Activated T-helper 1 cell treated with anti-CD3 and anti-CD28 coated beads, Interleukin-12 subunit alpha, Interleukin-12 subunit beta, Interleukin-2, Interleukin-4 antibody, amounts not matched to agents 30 ng/mL and 10 ng/mL and 1 ng/mL, durations not matched to agents 14 hours and 24 hours and 36 hours (primary cell): ENCODE measurements at regions of chr1 and their contacts with region 1.

Region 1: GRCh38 chr1:156601122-156601830 is at the start of gene GPATCH4:
- DNase-seq: peak; percentile 76
- H3K4me3 Mint-ChIP-seq: peak within 1 kb of the TSS; percentile 100
- H3K27ac Mint-ChIP-seq: peak within 1 kb of the TSS; percentile 99
- H3K4me1 Mint-ChIP-seq: peaks cover 37% of the 10 kb centered on the region
- H3K27me3 Mint-ChIP-seq: no peaks in the 10 kb centered on the region
- total RNA-seq, gene GPATCH4: 102 and 104 TPM in 2 replicates

Region 2: DNA sequence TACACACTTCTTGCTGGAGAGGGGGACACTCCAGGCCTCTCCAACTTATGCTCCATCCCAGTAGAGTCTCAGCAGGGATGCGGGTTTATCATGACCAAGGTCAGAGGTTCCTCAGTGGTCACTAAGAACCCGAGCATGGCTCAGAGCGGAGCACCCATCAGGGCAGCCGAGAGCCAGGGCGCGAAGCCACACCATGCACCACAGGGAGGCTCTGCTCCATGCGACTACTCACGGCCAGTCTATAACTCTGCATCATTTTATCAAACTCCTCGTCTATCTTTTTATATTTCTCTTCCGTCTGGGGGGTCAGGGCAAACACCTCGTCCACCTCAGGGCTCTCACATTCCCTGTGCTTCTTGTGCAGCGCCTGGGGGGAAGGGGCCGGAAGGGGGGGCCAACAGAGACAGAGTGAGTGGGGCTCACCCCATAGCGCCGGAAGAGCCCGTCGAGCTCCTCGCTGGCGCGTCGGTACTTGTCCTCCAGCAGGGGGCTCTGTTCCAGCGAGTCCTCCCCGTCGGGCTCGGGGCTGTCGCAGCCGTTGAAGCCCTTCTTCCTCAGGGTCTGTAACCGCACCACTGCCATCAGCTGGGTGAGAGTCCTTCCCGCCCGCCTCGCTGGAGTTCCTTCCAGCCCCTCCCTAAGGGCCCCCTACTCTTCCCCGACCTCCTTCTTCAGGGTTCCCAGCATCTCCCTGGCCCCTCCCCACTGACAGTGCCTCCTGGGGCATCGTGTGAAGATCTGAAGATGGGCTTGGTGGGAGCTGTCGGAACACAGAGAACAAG is 120.7 kb before region 1 on chr1:
- intact Hi-C with region 1: loop called (anchors 2 kb)
- DNase-seq: peak; percentile 63
- H3K4me3 Mint-ChIP-seq: peak overlapping the region; percentile 17
- H3K27ac Mint-ChIP-seq: peak overlapping the region; percentile 78
- H3K4me1 Mint-ChIP-seq: peaks cover 53% of the 10 kb centered on the region
- H3K27me3 Mint-ChIP-seq: no peaks in the 10 kb centered on the region

Region 3: DNA sequence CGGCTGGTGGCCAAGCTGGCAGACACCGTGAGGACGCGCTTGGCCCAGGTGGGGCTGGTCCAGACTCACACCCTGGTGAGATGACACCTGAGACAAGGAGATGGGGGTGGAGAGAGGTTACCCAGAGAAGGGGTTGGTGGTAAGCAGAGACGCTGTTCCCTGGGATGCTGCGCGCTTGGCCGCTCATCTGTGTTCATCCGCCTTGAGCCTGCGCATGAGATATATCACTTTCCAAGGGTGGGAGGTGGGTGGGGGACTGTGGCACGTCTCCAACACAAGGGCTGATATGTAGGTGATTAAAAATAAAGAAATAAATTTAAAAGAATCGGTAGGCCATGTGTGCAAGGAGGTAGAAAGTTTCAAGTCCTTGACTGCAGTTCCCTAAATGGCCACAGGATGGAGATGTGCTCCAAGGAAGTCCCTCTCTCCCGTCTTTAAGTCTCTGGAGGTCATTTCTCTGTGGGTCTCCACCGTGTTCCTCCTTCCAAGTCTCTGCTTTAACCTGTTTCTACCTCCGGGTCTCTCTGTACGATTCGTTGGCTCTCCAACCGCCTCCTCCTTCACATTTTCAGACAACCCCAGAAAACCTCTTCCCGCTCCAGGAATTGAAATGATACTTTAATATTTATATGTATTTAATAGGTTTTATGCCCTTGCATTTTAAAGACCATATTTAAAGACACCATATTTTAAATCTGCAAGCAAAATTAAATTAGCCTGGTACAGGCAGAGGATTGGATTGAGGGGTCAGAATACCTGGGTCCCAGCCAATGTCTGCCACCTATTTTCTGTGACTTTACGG is 17.3 kb before region 1 on chr1:
- intact Hi-C with region 1: loop called (anchors 1 kb)
- DNase-seq: peak; percentile 51
- H3K4me3 Mint-ChIP-seq: no peak overlapping the region
- H3K27ac Mint-ChIP-seq: no peak overlapping the region
- H3K4me1 Mint-ChIP-seq: peaks cover 12% of the 10 kb centered on the region
- H3K27me3 Mint-ChIP-seq: no peaks in the 10 kb centered on the region

Region 4: GRCh38 chr1:156689035-156689952 is 88.0 kb after region 1 on chr1:
- intact Hi-C with region 1: no loop called
- DNase-seq: peak; percentile 64
- H3K4me3 Mint-ChIP-seq: peak overlapping the region; percentile 69
- H3K27ac Mint-ChIP-seq: no peak overlapping the region
- H3K4me1 Mint-ChIP-seq: peaks cover 32% of the 10 kb centered on the region
- H3K27me3 Mint-ChIP-seq: peaks cover 54% of the 10 kb centered on the region

Region 5: GRCh38 chr1:158203693-158204457 is 1602.6 kb after region 1 on chr1:
- intact Hi-C with region 1: no loop called
- DNase-seq: no peak
- H3K4me3 Mint-ChIP-seq: no peak overlapping the region
- H3K27ac Mint-ChIP-seq: no peak overlapping the region
- H3K4me1 Mint-ChIP-seq: peaks cover 16% of the 10 kb centered on the region
- H3K27me3 Mint-ChIP-seq: peaks cover 26% of the 10 kb centered on the region